CD4-positive, alpha-beta T cell (primary cell): ENCODE measurements at regions of chr11 and their contacts with region 1.

Region 1: DNA sequence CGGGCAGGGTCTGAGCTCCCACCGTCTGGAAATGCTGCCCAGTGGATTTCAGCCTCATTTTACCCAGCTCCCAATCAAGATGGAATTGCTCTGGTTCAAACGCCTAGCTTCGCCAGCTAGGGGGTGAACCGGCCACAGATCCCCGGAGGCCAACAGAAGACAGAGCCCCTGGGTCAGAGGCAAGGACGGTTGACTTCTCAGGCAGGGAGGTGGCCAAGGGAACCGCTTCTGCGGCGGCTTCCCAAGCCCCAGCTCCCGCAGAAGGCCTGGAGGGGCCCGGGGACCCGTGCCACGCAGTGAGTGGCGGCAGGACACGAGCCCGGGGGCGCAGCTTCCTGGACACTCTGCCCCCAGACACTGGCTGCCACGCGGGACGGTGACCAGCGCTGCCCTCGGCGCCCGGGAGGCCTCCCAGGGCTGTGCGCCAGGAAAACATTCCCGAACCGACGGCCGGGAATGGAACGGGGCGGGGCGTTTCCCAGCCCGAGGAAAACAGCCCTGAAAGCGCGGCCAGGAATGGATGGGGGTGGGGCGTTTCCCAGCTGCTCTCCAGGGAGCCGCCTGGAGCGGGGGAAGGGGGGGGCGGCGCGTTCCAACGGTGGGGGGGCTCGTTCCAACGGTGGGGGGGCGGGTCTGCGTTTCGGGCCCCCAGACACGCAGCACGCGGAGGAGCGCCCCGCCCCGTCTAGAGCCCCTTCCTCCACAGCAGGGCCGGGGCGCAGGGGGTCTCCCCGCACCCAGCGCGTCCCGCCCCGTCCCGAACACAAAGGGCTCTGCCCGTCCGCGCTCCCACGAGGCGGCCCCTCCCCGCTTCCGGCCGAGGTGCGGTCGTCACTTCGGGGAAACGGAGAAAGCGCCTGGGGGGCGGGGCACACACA is 13.5 kb upstream of the B4GALNT4 start:
- DNase-seq: peak; percentile 59 to 94 (median 88)
- ATAC-seq: peak; percentile 64
- H3K4me3 ChIP-seq: peak overlapping the region; percentile 55
- H3K4me3 Mint-ChIP-seq: peak overlapping the region; percentile 83
- H3K27ac ChIP-seq: peak overlapping the region; percentile 92 to 95
- H3K27ac Mint-ChIP-seq: no peak overlapping the region
- H3K4me1 ChIP-seq: peaks cover 31% of the 10 kb centered on the region
- H3K4me1 Mint-ChIP-seq: peaks cover 45% of the 10 kb centered on the region
- H3K27me3 ChIP-seq: no peaks in the 10 kb centered on the region
- H3K27me3 Mint-ChIP-seq: no peaks in the 10 kb centered on the region
- CTCF ChIP-seq: no peak

Region 2: DNA sequence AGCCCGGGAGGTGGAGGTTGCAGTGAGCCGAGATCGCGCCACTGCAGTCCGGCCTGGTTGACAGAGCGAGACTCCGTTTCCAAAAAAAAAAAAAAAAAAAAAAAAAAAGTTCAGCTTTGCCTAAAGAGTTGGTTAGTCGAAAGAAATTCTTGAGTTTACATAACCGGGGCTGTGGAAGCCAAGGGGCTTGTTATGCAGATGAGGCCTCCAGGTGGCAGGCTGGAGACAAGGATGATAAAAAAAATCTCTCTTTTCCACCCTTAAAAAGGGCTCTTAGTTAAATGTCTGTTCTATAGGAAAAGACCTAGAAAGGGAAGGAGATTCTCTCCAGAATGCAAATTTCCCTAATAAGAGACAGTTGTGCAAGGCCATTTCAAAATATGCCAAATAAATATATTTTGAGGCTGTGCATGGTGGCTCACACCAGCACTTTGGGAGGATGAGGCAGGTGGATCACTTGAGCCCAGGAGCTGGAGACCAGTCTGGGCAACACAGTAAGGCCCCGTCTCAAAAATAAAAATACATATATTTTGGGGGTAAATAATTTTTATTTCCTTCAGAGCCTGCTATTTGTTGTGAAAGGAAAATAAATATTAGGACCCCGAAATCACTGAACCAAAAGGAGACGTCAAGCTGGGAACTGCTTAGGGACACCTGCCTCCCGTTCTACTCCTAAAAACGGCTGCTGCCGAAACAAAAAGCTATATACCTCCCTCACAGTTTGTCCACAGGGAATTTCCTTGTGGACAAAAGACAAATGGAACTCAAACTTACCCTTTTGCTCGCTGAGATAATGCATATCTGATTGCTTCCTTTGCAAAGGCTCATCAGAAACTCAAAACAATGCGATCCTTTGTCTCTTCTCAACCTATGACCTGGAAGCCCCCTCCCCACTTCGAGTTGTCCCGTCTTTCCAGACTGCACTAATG is 50.6 kb before region 1 on chr11:
- CTCF ChIA-PET with region 1: interaction called, 21 read pairs
- POLR2A ChIA-PET with region 1: interaction called, 11 read pairs
- intact Hi-C with region 1: loop called in 1 of 2 experiments (anchors 5 kb)
- DNase-seq: peak in 9 of 14 experiments; percentile 52 to 87 (median 63)
- ATAC-seq: peak; percentile 37
- H3K4me3 ChIP-seq: no peak overlapping the region
- H3K4me3 Mint-ChIP-seq: peak overlapping the region; percentile 85
- H3K27ac ChIP-seq: no peak overlapping the region
- H3K27ac Mint-ChIP-seq: peak overlapping the region; percentile 96
- H3K4me1 ChIP-seq: peaks cover 50% of the 10 kb centered on the region
- H3K4me1 Mint-ChIP-seq: peaks cover 39% of the 10 kb centered on the region
- H3K27me3 ChIP-seq: no peaks in the 10 kb centered on the region
- H3K27me3 Mint-ChIP-seq: no peaks in the 10 kb centered on the region
- CTCF ChIP-seq: peak; percentile 80

Region 3: DNA sequence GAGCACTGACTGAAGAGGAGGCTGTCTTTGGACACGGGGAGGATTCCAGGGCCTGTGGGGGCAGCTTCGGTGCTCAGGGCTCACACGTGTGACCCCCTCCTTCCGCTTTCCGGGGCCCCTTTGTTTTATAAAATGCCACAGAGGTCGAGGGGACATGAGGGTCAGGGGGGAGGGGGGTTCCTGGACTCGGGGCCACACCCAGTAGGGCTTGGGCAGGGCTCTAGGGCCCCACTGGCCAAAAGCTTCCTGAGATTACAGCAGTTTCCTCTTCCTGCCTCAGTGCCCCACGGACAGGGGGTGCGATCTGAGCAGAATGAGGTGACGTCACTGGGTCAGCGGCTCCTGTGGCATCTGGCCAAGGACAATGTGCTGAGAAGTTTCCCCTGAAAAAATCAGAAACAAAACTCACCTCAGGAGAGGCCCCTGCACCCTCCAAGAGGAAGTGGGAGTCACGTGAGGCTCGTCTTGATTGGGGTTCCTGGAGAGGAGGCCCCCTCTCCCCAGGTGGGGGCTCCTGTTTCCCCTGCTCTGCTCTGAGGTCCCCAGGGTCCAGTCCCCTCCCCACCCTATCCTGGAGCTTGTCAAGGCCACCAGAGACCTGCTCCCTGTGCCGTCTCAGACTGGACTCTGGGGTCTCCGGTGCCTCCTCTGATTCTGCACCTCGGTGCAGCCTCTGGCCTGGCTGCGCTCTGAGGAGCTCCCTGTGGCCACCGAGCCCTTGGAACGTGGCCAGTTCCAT is 28.8 kb before region 1 on chr11:
- CTCF ChIA-PET with region 1: no interaction called
- POLR2A ChIA-PET with region 1: interaction called, 15 read pairs
- intact Hi-C with region 1: no loop called
- DNase-seq: peak in 8 of 14 experiments; percentile 50 to 90 (median 69)
- ATAC-seq: peak; percentile 60
- H3K4me3 ChIP-seq: peak overlapping the region; percentile 12
- H3K4me3 Mint-ChIP-seq: peak overlapping the region; percentile 59
- H3K27ac ChIP-seq: peak overlapping the region; percentile 71 to 89
- H3K27ac Mint-ChIP-seq: peak overlapping the region; percentile 83
- H3K4me1 ChIP-seq: peaks cover 73% of the 10 kb centered on the region
- H3K4me1 Mint-ChIP-seq: peaks cover 67% of the 10 kb centered on the region
- H3K27me3 ChIP-seq: no peaks in the 10 kb centered on the region
- H3K27me3 Mint-ChIP-seq: no peaks in the 10 kb centered on the region
- CTCF ChIP-seq: no peak

Region 4: DNA sequence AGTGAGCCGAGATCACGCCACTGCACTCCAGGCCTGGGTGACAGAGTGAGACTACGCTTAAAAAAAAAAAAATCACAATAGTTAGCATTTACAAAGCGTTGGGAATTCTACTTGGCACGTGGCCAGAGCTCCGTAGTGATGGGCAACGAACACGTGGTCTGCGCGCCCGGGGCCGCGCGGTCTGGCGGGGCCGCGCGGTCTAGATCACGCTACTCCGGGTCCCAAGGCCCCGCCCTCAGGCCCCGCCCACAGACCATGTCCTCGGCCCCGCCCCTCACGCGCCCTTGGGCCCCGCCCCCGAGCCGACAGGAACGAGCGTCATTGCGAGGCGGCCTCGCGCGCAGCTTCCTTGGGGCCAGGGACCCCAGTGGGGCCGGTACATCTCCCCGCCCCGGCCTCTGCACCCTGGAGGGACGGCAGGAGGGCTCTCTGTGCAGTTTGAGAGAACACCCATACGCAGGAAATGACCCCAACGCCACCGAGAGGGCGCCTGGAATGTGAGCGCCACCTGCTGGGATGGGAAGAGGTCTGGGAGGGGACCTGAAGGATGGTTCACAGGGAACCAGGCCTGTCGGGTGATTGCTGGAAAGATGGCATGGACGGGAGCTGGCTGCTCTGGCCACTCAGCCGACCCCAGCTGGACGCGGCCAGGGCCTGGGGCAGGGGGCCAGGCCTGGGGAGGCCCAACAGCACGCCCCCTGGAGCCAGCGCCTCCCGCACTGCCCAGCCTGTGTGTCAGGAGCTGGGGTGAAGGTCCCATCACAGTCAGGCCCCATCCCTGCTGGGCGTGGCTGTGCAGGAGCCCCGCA is 92.3 kb after region 1 on chr11:
- CTCF ChIA-PET with region 1: interaction called, 6 read pairs
- POLR2A ChIA-PET with region 1: interaction called, 6 read pairs
- intact Hi-C with region 1: loop called in 1 of 2 experiments (anchors 2 kb)
- DNase-seq: peak; percentile 91 to 98 (median 94)
- ATAC-seq: peak; percentile 66
- H3K4me3 ChIP-seq: peak overlapping the region; percentile 63
- H3K4me3 Mint-ChIP-seq: peak overlapping the region; percentile 93
- H3K27ac ChIP-seq: peak overlapping the region; percentile 84 to 89
- H3K27ac Mint-ChIP-seq: peak overlapping the region; percentile 95
- H3K4me1 ChIP-seq: peaks cover 38% of the 10 kb centered on the region
- H3K4me1 Mint-ChIP-seq: peaks cover 26% of the 10 kb centered on the region
- H3K27me3 ChIP-seq: no peaks in the 10 kb centered on the region
- H3K27me3 Mint-ChIP-seq: no peaks in the 10 kb centered on the region
- CTCF ChIP-seq: peak; percentile 93